Activated CD4-positive, alpha-beta T cell treated with anti-CD3 and anti-CD28 coated beads, Interleukin-2, amount 10 ng/mL, durations not matched to agents 24 days and 14 days (primary cell): ENCODE measurements at regions of chr3 and their contacts with region 1.

Region 1: GRCh38 chr3:186806089-186807055 is at the start of gene RFC4:
- DNase-seq: peak; percentile 96
- H3K4me3 Mint-ChIP-seq: peak within 1 kb of the TSS; percentile 93
- H3K27ac Mint-ChIP-seq: peak within 1 kb of the TSS; percentile 91
- H3K4me1 Mint-ChIP-seq: peaks cover 24% of the 10 kb centered on the region
- H3K27me3 Mint-ChIP-seq: no peaks in the 10 kb centered on the region
- total RNA-seq, gene RFC4: 116 and 119 TPM in 2 replicates

Region 2: GRCh38 chr3:186653080-186653707 is 153.2 kb before region 1 on chr3:
- intact Hi-C with region 1: no loop called
- DNase-seq: no peak
- H3K4me3 Mint-ChIP-seq: no peak overlapping the region
- H3K27ac Mint-ChIP-seq: no peak overlapping the region
- H3K4me1 Mint-ChIP-seq: no peaks in the 10 kb centered on the region
- H3K27me3 Mint-ChIP-seq: peaks cover 19% of the 10 kb centered on the region

Region 3: DNA sequence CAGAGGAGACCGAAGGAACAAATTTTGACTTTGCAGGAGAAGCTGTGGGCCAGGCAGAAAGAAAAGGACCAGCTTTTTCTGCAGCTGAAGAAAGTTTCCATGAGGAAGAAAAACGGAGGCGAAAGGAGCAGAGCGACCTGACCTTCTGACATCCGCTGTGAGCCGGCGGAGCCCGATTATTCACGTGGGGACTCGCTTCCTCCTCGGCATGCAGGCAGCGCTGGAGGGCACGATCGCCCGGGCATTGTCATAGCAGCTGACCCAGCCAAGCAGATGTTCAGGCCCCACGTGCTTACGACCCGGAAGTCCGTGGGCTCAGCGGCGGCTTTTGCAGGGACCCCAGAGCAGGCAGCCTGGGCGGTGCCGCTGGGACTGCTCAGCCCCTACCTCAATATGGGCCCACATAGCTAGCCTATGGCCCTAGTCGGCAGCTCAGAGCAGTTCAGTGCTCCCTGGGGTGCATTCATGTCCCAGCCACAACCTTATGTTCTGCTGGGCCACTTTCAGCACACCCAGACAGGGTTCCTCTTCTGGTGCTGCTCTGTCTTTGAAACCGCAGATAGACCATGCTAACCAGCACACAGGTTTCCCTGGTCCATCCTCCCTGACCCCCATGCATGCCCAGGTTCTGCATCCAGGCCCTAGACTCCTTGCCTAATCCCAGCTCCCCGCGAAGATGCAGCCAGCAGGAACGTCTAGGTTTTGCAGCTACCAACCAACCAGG is 33.5 kb before region 1 on chr3:
- intact Hi-C with region 1: loop called (anchors 5 kb)
- DNase-seq: peak; percentile 88
- H3K4me3 Mint-ChIP-seq: peak overlapping the region; percentile 90
- H3K27ac Mint-ChIP-seq: peak overlapping the region; percentile 97
- H3K4me1 Mint-ChIP-seq: peaks cover 9% of the 10 kb centered on the region
- H3K27me3 Mint-ChIP-seq: peaks cover 3% of the 10 kb centered on the region